Dorsolateral prefrontal cortex (tissue), 120 donors: ENCODE measurements at regions of chr18 and their contacts with region 1.

Region 1: GRCh38 chr18:35240664-35241447 is at the start of gene ZNF397:
- DNase-seq: peak; percentile 94 to 99 (median 97)
- H3K4me3 ChIP-seq: peak within 1 kb of the TSS; percentile 64 to 92 (median 83)
- H3K27ac ChIP-seq: peak within 1 kb of the TSS; percentile 87 to 100 (median 99)
- H3K27me3 ChIP-seq: no peaks in the 10 kb centered on the region
- CTCF ChIP-seq: peak in 20 of 56 donors; percentile 1 to 41 (median 21)
- total RNA-seq, gene ZNF397: 32.9 to 72.7 (median 48.5) TPM

Region 2: GRCh38 chr18:35005963-35006577 is 234.8 kb before region 1 on chr18:
- intact Hi-C with region 1: loop called in 1 of 2 experiments (anchors 10 kb)
- DNase-seq: peak in 1 of 10 donors; percentile 5
- H3K4me3 ChIP-seq: peak overlapping the region in 6 of 59 donors; percentile 0 to 22 (median 8)
- H3K27ac ChIP-seq: peak overlapping the region in 34 of 59 donors; percentile 3 to 97 (median 38)
- H3K27me3 ChIP-seq: no peaks in the 10 kb centered on the region
- CTCF ChIP-seq: peak; percentile 59 to 95 (median 80)

Region 3: DNA sequence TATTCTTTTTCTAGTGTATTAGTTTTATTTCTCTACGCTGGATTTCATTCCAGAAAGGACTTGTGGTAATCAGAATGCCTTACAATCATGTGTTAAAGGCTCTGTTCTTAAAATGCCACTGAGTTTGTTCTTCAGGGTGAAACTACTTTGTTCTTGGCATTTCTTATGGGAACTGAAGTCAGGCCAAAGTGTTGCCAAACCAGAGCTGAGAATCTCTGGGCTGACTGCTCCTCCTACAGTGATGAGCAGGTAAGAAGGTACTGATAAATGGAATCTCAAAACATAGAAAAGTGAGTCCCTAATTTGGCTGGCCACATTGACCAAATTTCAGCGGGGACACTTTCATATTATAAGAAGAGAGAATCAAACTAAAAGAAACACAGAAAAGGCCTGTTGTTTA is 55.1 kb before region 1 on chr18:
- intact Hi-C with region 1: loop called in 1 of 2 experiments (anchors 5 kb)
- DNase-seq: no peak
- H3K4me3 ChIP-seq: no peak overlapping the region
- H3K27ac ChIP-seq: peak overlapping the region in 27 of 59 donors; percentile 1 to 97 (median 28)
- H3K27me3 ChIP-seq: no peaks in the 10 kb centered on the region
- CTCF ChIP-seq: peak in 3 of 56 donors; percentile 6 to 20 (median 15)

Region 4: DNA sequence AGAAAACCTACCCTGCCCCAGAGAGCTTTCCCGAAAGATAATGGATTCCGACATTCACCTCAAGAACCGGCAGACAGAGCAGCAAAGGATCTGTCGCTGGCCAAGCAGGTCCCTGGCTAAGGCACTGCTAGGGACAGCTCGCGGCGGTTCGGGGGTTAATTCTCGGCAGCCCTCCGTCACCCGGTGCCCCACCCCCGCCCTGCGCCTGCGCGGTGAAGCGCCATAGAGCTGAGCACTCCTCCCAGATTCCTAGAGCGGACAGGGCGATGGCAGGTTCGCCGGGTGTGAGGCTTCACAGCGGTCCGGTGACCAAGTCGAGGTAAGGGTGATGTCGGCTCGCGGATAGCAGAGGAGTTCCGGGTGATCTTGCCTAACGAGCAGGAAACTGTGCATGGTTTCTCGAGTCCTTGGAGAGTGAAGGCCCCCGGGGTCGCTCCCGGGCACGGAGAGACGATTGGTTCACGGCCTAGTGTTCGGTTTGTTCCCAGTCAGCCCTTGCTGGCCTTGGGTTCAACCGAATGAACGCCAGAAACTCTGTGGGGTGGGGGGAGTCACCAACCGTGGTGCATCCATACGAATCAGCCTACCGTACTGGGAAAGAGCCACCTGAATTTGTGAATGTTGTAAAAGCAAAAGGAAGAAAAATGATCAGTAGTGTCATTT is 49.3 kb after region 1 on chr18 and contains the start of gene ZSCAN30:
- intact Hi-C with region 1: loop called (anchors 5 kb)
- DNase-seq: peak; percentile 88 to 95 (median 94)
- H3K4me3 ChIP-seq: peak within 1 kb of the TSS; percentile 63 to 99 (median 86)
- H3K27ac ChIP-seq: peak within 1 kb of the TSS; percentile 26 to 96 (median 85)
- H3K27me3 ChIP-seq: no peaks in the 10 kb centered on the region
- CTCF ChIP-seq: peak in 23 of 56 donors; percentile 8 to 47 (median 21)
- total RNA-seq, gene ZSCAN30: 17.0 to 49.2 (median 28.7) TPM

Region 5: GRCh38 chr18:35376393-35376741 is 135.5 kb after region 1 on chr18:
- intact Hi-C with region 1: no loop called
- DNase-seq: peak in 1 of 10 donors; percentile 50
- H3K4me3 ChIP-seq: peak overlapping the region; percentile 60 to 97 (median 83)
- H3K27ac ChIP-seq: peak overlapping the region in 18 of 59 donors; percentile 6 to 79 (median 28)
- H3K27me3 ChIP-seq: no peaks in the 10 kb centered on the region
- CTCF ChIP-seq: no peak

Region 6: GRCh38 chr18:35386600-35387351 is 145.9 kb after region 1 on chr18:
- intact Hi-C with region 1: no loop called
- DNase-seq: peak in 8 of 10 donors; percentile 25 to 70 (median 54)
- H3K4me3 ChIP-seq: peak overlapping the region in 16 of 59 donors; percentile 1 to 45 (median 16)
- H3K27ac ChIP-seq: peak overlapping the region in 7 of 59 donors; percentile 17 to 56 (median 33)
- H3K27me3 ChIP-seq: no peaks in the 10 kb centered on the region
- CTCF ChIP-seq: peak; percentile 76 to 96 (median 88)